A549 (cell line): ENCODE measurements at regions of chr1 and their contacts with region 1.

Region 1: GRCh38 chr1:27097484-27097917 is 57.4 kb downstream of the SLC9A1 start:
- DNase-seq: peak; percentile 71
- ATAC-seq: peak; percentile 68 to 83; a peak in 5 of 6 replicates
- H3K4me3 ChIP-seq: no peak overlapping the region
- H3K27ac ChIP-seq: 0 out of 6 replicates have a peak overlapping the region, but pooled peaks of 1 of the 2 experiments have one; percentile 43
- H3K4me1 ChIP-seq: peaks cover 32% of the 10 kb centered on the region
- CTCF ChIP-seq: peak; percentile 79
- EP300 ChIP-seq: no peak
- POLR2A ChIP-seq: no peak
- RAD21 ChIP-seq: peak; percentile 86 to 88

Region 2: GRCh38 chr1:26900001-26900814 is 197.3 kb before region 1 on chr1 and contains the start of gene GPATCH3:
- CTCF ChIA-PET with region 1: no interaction called
- POLR2A ChIA-PET with region 1: no interaction called
- DNase-seq: peak; percentile 86 to 91
- ATAC-seq: peak; percentile 92 to 95
- H3K4me3 ChIP-seq: peak within 1 kb of the TSS; percentile 91
- H3K27ac ChIP-seq: peak within 1 kb of the TSS; percentile 79 to 91
- H3K4me1 ChIP-seq: peaks cover 5% of the 10 kb centered on the region; the same call in 1 of the 3 replicates
- CTCF ChIP-seq: no peak
- EP300 ChIP-seq: no peak
- POLR2A ChIP-seq: peak; percentile 81
- RAD21 ChIP-seq: no peak
- polyA plus RNA-seq, gene GPATCH3: 4.9 and 5.4 TPM in 2 replicates

Region 3: DNA sequence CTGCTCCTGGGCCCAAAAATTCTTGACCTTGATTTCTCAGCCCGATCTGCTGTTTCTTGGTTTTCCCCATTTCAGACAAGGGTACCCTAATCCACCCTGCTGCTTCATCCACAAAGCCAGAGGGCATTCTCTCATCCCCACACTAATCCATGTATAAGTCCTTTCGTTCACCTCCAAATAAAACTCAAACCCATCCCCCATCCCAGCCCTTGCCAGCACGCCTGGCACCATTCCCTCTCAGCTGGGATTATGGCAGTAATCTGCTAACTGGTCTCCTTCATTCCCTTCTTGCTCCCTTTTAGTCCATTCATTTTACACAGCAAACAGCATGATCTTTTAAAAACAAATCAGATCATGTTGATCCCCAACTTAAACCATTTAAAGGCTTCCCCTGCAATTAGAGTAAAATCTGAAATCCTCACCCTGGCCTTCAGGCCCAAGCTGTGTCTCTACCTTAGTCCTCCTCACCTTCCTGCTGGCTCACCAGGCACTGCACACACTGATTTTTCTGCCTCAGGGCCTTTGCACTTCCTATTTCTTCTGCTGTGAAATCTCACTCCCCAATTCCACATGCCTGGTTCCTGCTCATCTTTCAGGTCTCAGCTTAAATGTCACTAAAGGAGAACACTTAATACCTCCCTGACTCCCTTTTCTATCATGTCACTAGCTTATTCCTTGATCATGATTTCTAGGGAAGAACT is 116.2 kb before region 1 on chr1:
- CTCF ChIA-PET with region 1: no interaction called
- POLR2A ChIA-PET with region 1: no interaction called
- DNase-seq: no peak
- ATAC-seq: no peak
- H3K4me3 ChIP-seq: no peak overlapping the region
- H3K27ac ChIP-seq: peak overlapping the region in 1 of 2 experiments; percentile 61; a peak in 3 of 6 replicates
- H3K4me1 ChIP-seq: no peaks in the 10 kb centered on the region; the same call in 2 of the 3 replicates
- CTCF ChIP-seq: no peak
- EP300 ChIP-seq: no peak
- POLR2A ChIP-seq: no peak
- RAD21 ChIP-seq: no peak

Region 4: DNA sequence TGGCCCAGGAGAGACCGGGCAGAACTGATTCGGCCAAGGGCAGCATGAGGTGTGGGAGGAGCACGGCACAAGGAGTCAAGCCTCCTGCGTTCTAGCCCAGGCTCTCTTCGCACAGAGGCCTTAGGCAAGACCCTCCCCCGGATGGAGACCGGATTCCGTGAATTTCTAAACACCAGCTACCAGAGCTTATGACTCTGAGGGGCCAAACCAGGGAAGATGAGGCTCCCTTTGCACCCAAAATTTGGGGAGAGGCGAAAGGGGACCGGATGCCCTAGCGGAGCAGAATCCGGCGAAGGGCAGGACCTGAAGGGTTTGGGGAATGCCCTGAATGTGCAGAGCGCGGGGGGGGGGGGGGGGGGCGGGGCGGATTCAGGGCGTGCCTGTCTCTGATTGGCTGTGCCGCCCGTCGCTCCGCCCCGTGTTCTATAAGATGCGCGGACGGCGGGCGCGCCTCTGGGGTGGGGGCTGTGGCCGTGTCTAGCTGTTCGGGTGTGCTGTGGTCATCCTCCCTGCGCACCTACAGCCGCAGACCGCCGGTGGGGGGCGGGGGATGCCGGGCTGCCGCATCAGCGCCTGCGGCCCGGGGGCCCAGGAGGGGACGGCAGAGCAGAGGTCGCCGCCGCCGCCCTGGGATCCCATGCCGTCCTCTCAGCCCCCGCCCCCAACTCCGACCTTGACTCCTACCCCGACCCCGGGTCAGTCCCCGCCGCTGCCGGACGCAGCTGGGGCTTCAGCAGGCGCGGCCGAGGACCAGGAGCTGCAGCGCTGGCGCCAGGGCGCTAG is 104.1 kb before region 1 on chr1 and contains the start of gene TRNP1:
- CTCF ChIA-PET with region 1: interaction called, 50 read pairs
- POLR2A ChIA-PET with region 1: no interaction called
- DNase-seq: peak; percentile 77 to 91
- ATAC-seq: peak; percentile 36 to 56
- H3K4me3 ChIP-seq: peak within 1 kb of the TSS; percentile 96
- H3K27ac ChIP-seq: peak within 1 kb of the TSS; percentile 100
- H3K4me1 ChIP-seq: peaks cover 53% of the 10 kb centered on the region
- CTCF ChIP-seq: no peak
- EP300 ChIP-seq: no peak
- POLR2A ChIP-seq: peak; percentile 99
- RAD21 ChIP-seq: 0 out of 5 replicates have a peak, but pooled peaks of 1 of the 2 experiments have one; percentile 17
- polyA plus RNA-seq, gene TRNP1: 113 and 134 TPM in 2 replicates

Region 5: GRCh38 chr1:26999440-26999987 is 98.0 kb before region 1 on chr1:
- CTCF ChIA-PET with region 1: interaction called, 50 read pairs
- POLR2A ChIA-PET with region 1: no interaction called
- DNase-seq: peak; percentile 80 to 90
- ATAC-seq: peak; percentile 48 to 56
- H3K4me3 ChIP-seq: peak overlapping the region; percentile 96; the same call in 2 of the 3 replicates
- H3K27ac ChIP-seq: peak overlapping the region; percentile 100
- H3K4me1 ChIP-seq: peaks cover 71% of the 10 kb centered on the region
- CTCF ChIP-seq: no peak
- EP300 ChIP-seq: peak in 1 of 2 experiments; percentile 28; a peak in 1 of 5 replicates
- POLR2A ChIP-seq: no peak
- RAD21 ChIP-seq: peak in 1 of 2 experiments; percentile 4; a peak in 1 of 5 replicates

Region 6: GRCh38 chr1:27057801-27058625 is 39.5 kb before region 1 on chr1:
- CTCF ChIA-PET with region 1: interaction called, 31 read pairs
- POLR2A ChIA-PET with region 1: no interaction called
- DNase-seq: no peak
- ATAC-seq: peak; percentile 34 to 72; a peak in 4 of 6 replicates
- H3K4me3 ChIP-seq: no peak overlapping the region
- H3K27ac ChIP-seq: no peak overlapping the region
- H3K4me1 ChIP-seq: no peaks in the 10 kb centered on the region
- CTCF ChIP-seq: no peak
- EP300 ChIP-seq: no peak
- POLR2A ChIP-seq: no peak
- RAD21 ChIP-seq: no peak

Region 7: GRCh38 chr1:27284425-27285273 is 187.1 kb after region 1 on chr1:
- CTCF ChIA-PET with region 1: interaction called, 174 read pairs
- POLR2A ChIA-PET with region 1: no interaction called
- DNase-seq: peak; percentile 73 to 84
- ATAC-seq: peak; percentile 93 to 95
- H3K4me3 ChIP-seq: no peak overlapping the region
- H3K27ac ChIP-seq: no peak overlapping the region
- H3K4me1 ChIP-seq: no peaks in the 10 kb centered on the region
- CTCF ChIP-seq: peak; percentile 78
- EP300 ChIP-seq: no peak
- POLR2A ChIP-seq: no peak
- RAD21 ChIP-seq: peak; percentile 73 to 76